CD8-positive, alpha-beta memory T cell (primary cell): ENCODE measurements at regions of chr6 and their contacts with region 1.

Region 1: GRCh38 chr6:75563032-75563431 is 38.6 kb upstream of the SENP6 start:
- DNase-seq: peak in 2 of 5 donors; percentile 2 to 3
- H3K4me3 ChIP-seq: no peak overlapping the region
- H3K4me3 Mint-ChIP-seq: no peak overlapping the region
- H3K27ac ChIP-seq: no peak overlapping the region
- H3K27ac Mint-ChIP-seq: no peak overlapping the region
- H3K4me1 ChIP-seq: no peaks in the 10 kb centered on the region
- H3K4me1 Mint-ChIP-seq: no peaks in the 10 kb centered on the region
- H3K27me3 ChIP-seq: no peaks in the 10 kb centered on the region
- H3K27me3 Mint-ChIP-seq: peaks cover 15 to 57% of the 10 kb centered on the region in 2 donors

Region 2: GRCh38 chr6:73823046-73823735 is 1739.8 kb before region 1 on chr6:
- CTCF ChIA-PET with region 1: no interaction called
- POLR2A ChIA-PET with region 1: interaction called, 13 read pairs
- DNase-seq: no peak
- H3K4me3 ChIP-seq: no peak overlapping the region
- H3K4me3 Mint-ChIP-seq: no peak overlapping the region
- H3K27ac ChIP-seq: no peak overlapping the region
- H3K27ac Mint-ChIP-seq: no peak overlapping the region
- H3K4me1 ChIP-seq: no peaks in the 10 kb centered on the region
- H3K4me1 Mint-ChIP-seq: no peaks in the 10 kb centered on the region
- H3K27me3 ChIP-seq: no peaks in the 10 kb centered on the region
- H3K27me3 Mint-ChIP-seq: peaks cover 3 to 7% of the 10 kb centered on the region in 2 donors

Region 3: DNA sequence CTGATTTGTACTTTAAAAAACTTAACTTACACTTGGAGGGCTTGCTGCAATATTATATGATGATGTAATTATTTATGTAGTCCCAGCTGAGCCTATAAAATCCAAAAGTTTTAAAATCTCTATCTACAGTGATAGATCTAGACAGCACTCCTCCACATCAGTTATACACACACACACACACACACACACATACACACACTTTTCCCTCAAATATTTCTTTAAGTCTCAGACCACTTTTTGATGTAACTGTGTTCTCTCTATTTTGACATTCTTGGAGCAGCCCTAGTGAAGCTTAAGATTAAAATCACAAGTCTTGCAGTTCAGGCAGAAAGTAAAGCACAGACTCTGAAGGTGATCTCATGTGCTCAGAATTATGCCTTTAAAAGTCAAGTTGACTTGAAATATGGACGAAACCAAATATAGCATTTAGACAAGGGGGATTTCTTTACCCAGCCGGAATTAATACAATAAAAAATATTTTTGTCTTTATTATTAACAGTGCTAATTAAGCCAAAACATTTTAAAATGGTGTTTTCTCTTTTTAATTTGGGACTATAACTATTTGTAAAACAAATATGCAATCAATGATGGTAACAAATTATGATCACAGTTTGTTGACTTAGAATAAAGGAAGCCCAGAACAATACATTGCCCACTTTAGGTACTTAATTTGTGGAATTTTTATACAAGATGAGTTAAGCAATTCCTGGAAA is 215.0 kb before region 1 on chr6:
- CTCF ChIA-PET with region 1: no interaction called
- POLR2A ChIA-PET with region 1: no interaction called
- DNase-seq: no peak
- H3K4me3 ChIP-seq: no peak overlapping the region
- H3K4me3 Mint-ChIP-seq: no peak overlapping the region
- H3K27ac ChIP-seq: no peak overlapping the region
- H3K27ac Mint-ChIP-seq: no peak overlapping the region
- H3K4me1 ChIP-seq: no peaks in the 10 kb centered on the region
- H3K4me1 Mint-ChIP-seq: peaks cover 0 to 10% (median 0%) of the 10 kb centered on the region in 3 donors
- H3K27me3 ChIP-seq: no peaks in the 10 kb centered on the region
- H3K27me3 Mint-ChIP-seq: peaks cover 7 to 54% of the 10 kb centered on the region in 2 donors

Region 4: GRCh38 chr6:75418233-75418632 is 144.8 kb before region 1 on chr6:
- CTCF ChIA-PET with region 1: no interaction called
- POLR2A ChIA-PET with region 1: no interaction called
- DNase-seq: no peak
- H3K4me3 ChIP-seq: no peak overlapping the region
- H3K4me3 Mint-ChIP-seq: no peak overlapping the region
- H3K27ac ChIP-seq: no peak overlapping the region
- H3K27ac Mint-ChIP-seq: no peak overlapping the region
- H3K4me1 ChIP-seq: no peaks in the 10 kb centered on the region
- H3K4me1 Mint-ChIP-seq: no peaks in the 10 kb centered on the region
- H3K27me3 ChIP-seq: no peaks in the 10 kb centered on the region
- H3K27me3 Mint-ChIP-seq: peaks cover 5 to 37% of the 10 kb centered on the region in 2 donors

Region 5: GRCh38 chr6:75656479-75656878 is 93.4 kb after region 1 on chr6:
- CTCF ChIA-PET with region 1: no interaction called
- POLR2A ChIA-PET with region 1: no interaction called
- DNase-seq: no peak
- H3K4me3 ChIP-seq: no peak overlapping the region
- H3K4me3 Mint-ChIP-seq: no peak overlapping the region
- H3K27ac ChIP-seq: no peak overlapping the region
- H3K27ac Mint-ChIP-seq: peak overlapping the region in 3 of 8 donors; percentile 10 to 66 (median 55)
- H3K4me1 ChIP-seq: no peaks in the 10 kb centered on the region
- H3K4me1 Mint-ChIP-seq: peaks cover 0 to 12% (median 3%) of the 10 kb centered on the region in 3 donors
- H3K27me3 ChIP-seq: no peaks in the 10 kb centered on the region
- H3K27me3 Mint-ChIP-seq: no peaks in the 10 kb centered on the region